Activated T-helper 1 cell treated with anti-CD3 and anti-CD28 coated beads, Interleukin-12 subunit alpha, Interleukin-12 subunit beta, Interleukin-2, Interleukin-4 antibody, amounts not matched to agents 30 ng/mL and 10 ng/mL and 1 ng/mL, durations not matched to agents 14 hours and 24 hours and 36 hours (primary cell): ENCODE measurements at regions of chr7 and their contacts with region 1.

Region 1: DNA sequence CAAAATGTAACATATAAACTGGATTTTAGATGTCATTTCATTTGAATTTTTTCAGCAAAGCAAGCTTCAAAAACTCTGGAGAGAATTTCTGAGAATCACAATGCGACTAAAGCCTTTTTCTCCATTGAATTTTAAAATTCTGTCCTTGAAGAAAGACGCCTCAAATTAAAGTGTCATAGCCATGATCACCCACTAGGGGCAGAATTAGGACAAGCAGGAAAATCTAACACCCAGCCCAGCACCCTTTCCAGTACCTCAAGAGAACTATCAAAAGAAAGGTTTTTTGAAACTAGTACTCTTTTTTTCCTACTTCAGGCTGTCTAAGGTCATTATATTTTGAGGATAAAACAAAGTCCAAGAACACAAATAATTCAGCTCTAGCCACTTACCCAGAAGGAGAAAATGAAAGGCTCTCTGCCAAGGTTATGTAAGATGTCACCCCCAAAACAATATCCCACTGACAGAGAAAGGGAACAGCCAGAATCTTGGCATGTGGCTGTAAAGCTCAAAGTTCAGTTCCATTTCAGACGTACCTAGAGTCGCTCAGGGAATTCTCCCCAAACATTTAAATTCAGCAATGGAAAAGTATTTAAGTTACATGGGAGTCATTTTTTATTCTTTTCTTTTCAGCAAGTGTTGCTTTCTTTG is 299.4 kb downstream of the SNX13 start:
- DNase-seq: no peak
- H3K4me3 Mint-ChIP-seq: no peak overlapping the region
- H3K27ac Mint-ChIP-seq: no peak overlapping the region
- H3K4me1 Mint-ChIP-seq: no peaks in the 10 kb centered on the region
- H3K27me3 Mint-ChIP-seq: peaks cover 4% of the 10 kb centered on the region

Region 2: GRCh38 chr7:16982640-16983350 is 658.1 kb before region 1 on chr7:
- intact Hi-C with region 1: loop called (anchors 5 kb)
- DNase-seq: no peak
- H3K4me3 Mint-ChIP-seq: no peak overlapping the region
- H3K27ac Mint-ChIP-seq: no peak overlapping the region
- H3K4me1 Mint-ChIP-seq: peaks cover 7% of the 10 kb centered on the region
- H3K27me3 Mint-ChIP-seq: peaks cover 18% of the 10 kb centered on the region